Mammary epithelial cell (primary cell): ENCODE measurements at regions of chr17 and their contacts with region 1.

Region 1: GRCh38 chr17:67221062-67221998 is 23.7 kb downstream of the HELZ start:
- DNase-seq: peak; percentile 44
- H3K4me3 ChIP-seq: no peak overlapping the region
- H3K27ac ChIP-seq: no peak overlapping the region
- H3K4me1 ChIP-seq: peaks cover 4% of the 10 kb centered on the region
- H3K27me3 ChIP-seq: no peaks in the 10 kb centered on the region
- CTCF ChIP-seq: peak; percentile 27 to 50

Region 2: DNA sequence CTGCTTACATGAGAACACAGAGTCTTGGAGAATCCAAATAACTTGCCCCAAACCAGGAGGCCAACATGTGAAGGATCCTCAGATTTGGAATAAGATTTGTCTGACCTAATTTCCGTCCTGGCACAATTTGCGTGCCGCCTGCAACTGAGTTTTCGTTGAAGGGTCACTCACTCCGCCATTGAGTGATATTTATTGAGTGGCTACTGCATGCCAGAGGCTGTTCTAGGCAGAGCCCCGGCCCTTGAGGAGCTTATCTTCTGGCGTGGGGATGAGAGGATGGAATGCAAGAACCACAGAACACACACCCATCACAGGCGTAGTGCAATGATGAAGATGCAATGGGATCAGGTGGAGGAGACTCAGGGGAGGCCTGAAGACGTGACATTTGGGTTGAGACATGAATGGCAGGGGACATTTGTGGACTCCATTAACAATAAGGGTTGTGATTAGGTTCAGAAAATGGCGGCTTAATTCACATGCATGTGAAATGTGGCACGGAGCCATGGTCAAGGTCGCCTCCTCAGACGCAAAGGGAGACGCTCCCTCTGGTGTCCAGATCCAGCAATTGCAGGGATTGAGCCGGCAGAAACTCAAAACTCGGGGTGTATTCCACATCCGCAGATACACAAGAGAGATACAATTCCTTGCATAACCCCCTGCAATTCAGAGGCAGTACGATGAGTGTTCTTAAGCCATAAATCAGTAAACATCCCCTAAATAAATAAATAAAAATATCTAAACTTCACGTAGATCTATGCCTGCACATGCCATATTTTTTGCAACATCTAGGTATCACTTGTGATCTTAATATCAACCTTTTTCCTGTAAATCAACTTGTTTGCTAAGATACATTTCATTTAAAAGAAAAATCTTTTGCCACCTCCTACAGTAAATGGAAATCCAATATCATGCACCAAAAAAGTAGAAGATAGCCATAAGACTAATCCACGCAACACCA is 314.7 kb before region 1 on chr17:
- CTCF ChIA-PET with region 1: no interaction called
- dilution Hi-C with region 1: no loop called
- in situ Hi-C with region 1: no loop called
- intact Hi-C with region 1: no loop called
- DNase-seq: peak; percentile 59
- H3K4me3 ChIP-seq: no peak overlapping the region
- H3K27ac ChIP-seq: no peak overlapping the region
- H3K4me1 ChIP-seq: peaks cover 19% of the 10 kb centered on the region
- H3K27me3 ChIP-seq: no peaks in the 10 kb centered on the region
- CTCF ChIP-seq: peak; percentile 96 to 97

Region 3: DNA sequence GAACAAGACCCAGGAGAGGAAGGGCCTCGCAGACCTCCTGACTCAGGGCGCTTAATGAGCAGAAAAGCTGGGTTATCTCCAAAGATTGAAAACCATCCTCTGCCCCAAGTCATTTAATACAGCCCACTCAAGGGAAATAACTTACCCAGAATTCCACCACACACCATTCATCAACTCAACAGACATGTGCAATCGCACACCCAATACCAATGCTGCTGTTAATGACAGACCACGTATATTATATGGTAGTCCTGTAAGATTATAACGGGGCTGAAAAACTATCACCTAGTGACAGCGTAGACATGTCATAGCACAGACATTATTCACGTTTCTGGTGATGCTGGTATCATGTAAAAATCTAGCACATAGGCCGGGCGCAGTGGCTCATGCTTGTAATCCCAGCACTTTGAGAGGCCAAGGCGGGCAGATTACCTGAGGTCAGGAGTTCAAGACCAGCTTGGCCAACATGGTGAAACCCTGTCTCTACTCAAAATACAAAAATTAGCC is 76.2 kb after region 1 on chr17:
- CTCF ChIA-PET with region 1: no interaction called
- dilution Hi-C with region 1: loop called (anchors 5 kb)
- in situ Hi-C with region 1: no loop called
- intact Hi-C with region 1: no loop called
- DNase-seq: no peak
- H3K4me3 ChIP-seq: no peak overlapping the region
- H3K27ac ChIP-seq: no peak overlapping the region
- H3K4me1 ChIP-seq: no peaks in the 10 kb centered on the region
- H3K27me3 ChIP-seq: no peaks in the 10 kb centered on the region
- CTCF ChIP-seq: no peak

Region 4: GRCh38 chr17:67336859-67337258 is 115.5 kb after region 1 on chr17:
- CTCF ChIA-PET with region 1: no interaction called
- dilution Hi-C with region 1: no loop called
- in situ Hi-C with region 1: no loop called
- intact Hi-C with region 1: loop called (anchors 5 kb)
- DNase-seq: no peak
- H3K4me3 ChIP-seq: no peak overlapping the region
- H3K27ac ChIP-seq: no peak overlapping the region
- H3K4me1 ChIP-seq: peaks cover 6% of the 10 kb centered on the region
- H3K27me3 ChIP-seq: no peaks in the 10 kb centered on the region
- CTCF ChIP-seq: no peak

Region 5: GRCh38 chr17:67366193-67367157 is 145.1 kb after region 1 on chr17 and contains the start of gene PSMD12:
- CTCF ChIA-PET with region 1: interaction called, 5 read pairs
- dilution Hi-C with region 1: no loop called
- in situ Hi-C with region 1: no loop called
- intact Hi-C with region 1: loop called (anchors 2 kb)
- DNase-seq: peak; percentile 85
- H3K4me3 ChIP-seq: peak within 1 kb of the TSS; percentile 62 to 99 (median 80)
- H3K27ac ChIP-seq: peak within 1 kb of the TSS; percentile 94
- H3K4me1 ChIP-seq: peaks cover 16% of the 10 kb centered on the region
- H3K27me3 ChIP-seq: no peaks in the 10 kb centered on the region
- CTCF ChIP-seq: peak in 1 of 2 donors; percentile 17
- total RNA-seq, gene PSMD12: 31.5 to 92.1 TPM